Right ventricle myocardium inferior (tissue), 1 donor: ENCODE measurements at regions of chr18 and their contacts with region 1.

Region 1: GRCh38 chr18:61426492-61427053 is 93.3 kb downstream of the CDH20 start:
- DNase-seq: peak; percentile 27
- ATAC-seq: no peak

Region 2: GRCh38 chr18:61292280-61293035 is 134.1 kb before region 1 on chr18:
- intact Hi-C with region 1: no loop called
- DNase-seq: no peak
- ATAC-seq: no peak

Region 3: DNA sequence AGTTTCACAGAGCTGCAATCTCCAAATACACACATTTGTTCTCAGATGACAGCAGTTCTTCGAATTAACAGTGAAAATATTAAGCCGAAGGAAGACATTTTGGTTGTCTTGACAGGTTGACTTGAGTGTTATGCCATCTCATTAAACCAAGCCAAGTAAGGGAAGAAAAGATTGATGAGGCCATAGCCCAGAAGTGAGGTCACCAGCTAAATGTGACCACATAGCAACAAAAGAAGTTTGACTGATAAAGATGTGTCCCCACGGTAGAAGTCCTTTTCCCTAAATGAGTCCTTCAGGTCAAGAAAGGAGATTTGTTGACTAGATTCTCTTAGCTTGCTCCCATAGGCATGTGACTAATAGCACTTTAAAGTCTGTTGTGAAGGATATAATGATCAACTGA is 62.8 kb after region 1 on chr18:
- intact Hi-C with region 1: loop called (anchors 10 kb)
- DNase-seq: no peak
- ATAC-seq: no peak